Activated naive CD4-positive, alpha-beta T cell treated with anti-CD3 and anti-CD28 coated beads, Interleukin-2, amount 10 ng/mL, durations not matched to agents 7 days and 5 days (primary cell): ENCODE measurements at regions of chr22 and their contacts with region 1.

Region 1: GRCh38 chr22:42868751-42869251 is 11.7 kb upstream of the ARFGAP3 start:
- DNase-seq: no peak
- H3K4me3 Mint-ChIP-seq: no peak overlapping the region
- H3K27ac Mint-ChIP-seq: no peak overlapping the region
- H3K4me1 Mint-ChIP-seq: peaks cover 2% of the 10 kb centered on the region
- H3K27me3 Mint-ChIP-seq: no peaks in the 10 kb centered on the region

Region 2: GRCh38 chr22:42780070-42780540 is 88.7 kb before region 1 on chr22:
- CTCF ChIA-PET with region 1: interaction called, 11 read pairs
- DNase-seq: peak; percentile 60
- H3K4me3 Mint-ChIP-seq: no peak overlapping the region
- H3K27ac Mint-ChIP-seq: no peak overlapping the region
- H3K4me1 Mint-ChIP-seq: no peaks in the 10 kb centered on the region
- H3K27me3 Mint-ChIP-seq: no peaks in the 10 kb centered on the region

Region 3: DNA sequence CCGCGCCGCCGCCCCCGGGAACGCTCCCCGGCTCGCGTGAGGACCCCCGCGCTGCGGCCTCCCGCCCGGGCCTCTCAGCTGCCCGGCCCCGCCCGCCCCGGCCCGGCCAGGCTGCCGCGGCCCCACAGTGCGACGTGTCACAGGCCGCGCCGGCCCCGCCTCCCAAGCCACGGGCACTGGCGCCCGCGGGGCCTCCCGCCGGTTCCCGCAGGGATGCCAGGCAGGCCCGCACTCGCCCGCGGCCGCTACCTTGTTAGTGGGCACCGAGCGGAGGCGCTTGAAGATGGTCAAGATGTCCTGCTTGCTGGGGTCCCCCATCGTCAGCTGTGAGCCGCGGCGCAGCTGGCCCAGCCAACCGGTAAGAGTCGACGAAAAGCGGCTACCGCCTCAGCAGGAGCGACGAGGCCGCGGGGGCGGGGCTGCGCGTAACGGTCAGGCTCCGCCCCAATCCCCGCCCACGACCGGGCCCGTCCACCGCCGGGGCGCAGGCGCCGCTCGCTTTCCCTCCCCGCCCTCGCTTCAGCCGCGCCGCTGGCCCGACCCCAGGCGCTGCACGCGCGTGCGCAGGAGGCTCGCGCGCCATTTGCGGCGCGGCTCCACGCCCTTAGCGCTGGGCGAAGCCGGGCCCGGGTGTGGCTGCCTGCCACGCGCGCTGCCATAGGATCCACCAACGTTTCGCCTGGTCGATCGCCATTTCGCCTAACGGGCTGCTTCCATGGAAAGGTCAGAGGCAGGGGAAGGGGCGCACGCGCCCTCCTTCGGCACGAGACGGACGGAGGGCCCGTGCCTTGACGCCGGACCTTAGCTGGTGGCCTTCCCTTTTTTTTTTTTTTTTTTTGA is 11.7 kb before region 1 on chr22 and contains the start of gene ARFGAP3:
- CTCF ChIA-PET with region 1: interaction called, 33 read pairs
- DNase-seq: peak; percentile 93
- H3K4me3 Mint-ChIP-seq: peak within 1 kb of the TSS; percentile 83
- H3K27ac Mint-ChIP-seq: peak within 1 kb of the TSS; percentile 91
- H3K4me1 Mint-ChIP-seq: peaks cover 11% of the 10 kb centered on the region
- H3K27me3 Mint-ChIP-seq: peaks cover 5% of the 10 kb centered on the region

Region 4: DNA sequence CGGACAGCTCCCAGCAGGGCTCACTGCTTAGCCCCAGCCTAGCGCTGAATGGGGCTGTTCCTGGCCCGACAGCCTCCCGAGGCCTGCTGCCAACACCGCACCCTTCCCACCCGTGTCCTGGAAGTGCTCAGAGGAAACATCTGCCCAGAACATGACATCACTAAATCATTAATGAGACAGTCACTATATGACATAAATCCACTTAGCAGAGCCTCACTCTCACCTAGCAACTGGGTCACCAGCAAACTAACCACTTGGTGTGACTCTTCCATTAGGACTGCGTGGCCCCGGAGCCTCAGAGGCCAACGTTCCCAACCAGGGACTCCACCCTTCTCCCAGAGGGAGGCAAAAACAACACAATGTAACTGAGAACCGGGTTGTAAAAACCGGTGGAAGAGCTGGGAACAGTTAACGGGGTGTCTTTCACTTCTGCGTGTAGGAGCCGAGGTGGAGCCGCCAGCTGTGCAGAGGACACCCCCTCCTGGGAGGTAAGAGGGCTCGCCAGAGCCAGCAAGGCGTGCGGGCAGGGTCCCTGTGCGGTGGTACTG is 167.6 kb after region 1 on chr22:
- CTCF ChIA-PET with region 1: interaction called, 22 read pairs
- DNase-seq: no peak
- H3K4me3 Mint-ChIP-seq: no peak overlapping the region
- H3K27ac Mint-ChIP-seq: no peak overlapping the region
- H3K4me1 Mint-ChIP-seq: no peaks in the 10 kb centered on the region
- H3K27me3 Mint-ChIP-seq: no peaks in the 10 kb centered on the region

Region 5: GRCh38 chr22:43050995-43051394 is 182.2 kb after region 1 on chr22:
- CTCF ChIA-PET with region 1: no interaction called
- DNase-seq: no peak
- H3K4me3 Mint-ChIP-seq: no peak overlapping the region
- H3K27ac Mint-ChIP-seq: no peak overlapping the region
- H3K4me1 Mint-ChIP-seq: no peaks in the 10 kb centered on the region
- H3K27me3 Mint-ChIP-seq: no peaks in the 10 kb centered on the region